Mucosa of descending colon (tissue), 3 donors: ENCODE measurements at regions of chr17 and their contacts with region 1.

Region 1: DNA sequence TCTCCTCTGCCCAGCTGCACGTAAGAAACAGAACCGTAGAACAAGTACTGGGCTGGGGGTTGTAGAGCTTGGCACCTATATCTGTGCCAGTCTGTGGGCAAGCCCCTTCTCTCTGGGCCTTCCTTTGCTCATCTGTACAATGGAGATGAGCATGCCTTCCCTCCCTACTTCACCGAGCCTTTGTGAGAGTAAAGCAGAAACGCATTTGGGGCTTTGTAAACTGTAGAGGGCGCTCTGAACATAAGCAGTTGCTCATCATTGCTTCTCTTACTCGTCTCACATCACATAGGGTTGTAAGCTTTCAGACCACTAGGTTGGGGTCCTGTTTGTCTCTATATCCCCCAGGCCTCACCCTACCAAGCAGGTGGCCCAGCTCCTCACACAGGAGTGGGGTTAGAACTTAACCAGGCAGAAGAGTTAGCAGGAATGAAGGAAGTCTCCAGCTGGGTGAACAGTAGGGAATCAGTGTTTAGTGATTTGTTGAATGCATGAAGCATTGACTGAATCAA is 15.1 kb downstream of the SAMD14 start:
- DNase-seq: peak in 1 of 3 donors; percentile 80
- ATAC-seq: peak; percentile 42
- H3K4me3 ChIP-seq: no peak overlapping the region
- H3K4me1 ChIP-seq: peaks cover 11% of the 10 kb centered on the region
- CTCF ChIP-seq: peak; percentile 44

Region 2: DNA sequence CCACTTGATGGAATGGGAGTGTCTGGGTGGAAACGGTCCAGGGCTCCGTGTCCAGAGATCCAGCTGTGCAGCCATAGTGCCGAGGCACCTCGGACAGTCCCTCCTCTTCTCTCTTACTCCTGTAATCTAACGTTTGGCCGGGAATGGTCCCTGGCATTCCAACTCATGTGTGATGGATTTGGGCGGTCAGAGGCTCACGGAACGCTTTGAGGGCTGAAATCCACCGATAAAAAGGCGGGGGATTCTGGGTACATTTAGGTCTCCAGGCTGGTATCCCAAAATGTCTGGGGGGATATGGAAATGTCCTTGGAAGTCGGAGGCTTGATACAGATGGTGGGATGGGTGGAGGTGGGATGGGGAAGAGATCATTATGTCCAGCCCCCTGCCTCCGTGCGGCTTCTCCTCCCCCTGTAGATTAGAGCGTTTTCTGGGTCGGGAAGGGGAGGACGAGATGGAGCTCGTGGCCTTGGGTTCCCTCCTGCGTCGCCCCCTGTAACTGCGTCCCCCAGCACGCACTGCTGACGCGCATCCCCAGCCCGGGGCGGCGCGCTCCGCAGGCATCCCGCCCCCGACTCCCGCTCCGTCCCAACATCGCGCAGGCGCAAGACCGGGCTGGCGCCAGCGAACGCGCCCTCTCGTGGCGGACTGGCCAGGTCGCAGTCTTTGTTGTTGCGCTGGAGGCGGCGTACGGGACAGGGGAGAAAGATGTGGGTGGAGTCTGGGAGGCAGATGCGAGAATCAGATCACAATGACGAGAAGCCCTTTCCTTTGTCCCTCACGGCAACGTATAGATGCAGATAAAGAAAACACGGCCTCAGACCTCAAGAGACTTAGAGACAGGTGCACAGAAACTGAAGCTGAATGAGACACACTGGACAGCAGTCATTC is 46.4 kb after region 1 on chr17:
- intact Hi-C with region 1: loop called in 1 of 2 experiments (anchors 10 kb)
- DNase-seq: peak; percentile 90 to 96 (median 93)
- ATAC-seq: peak; percentile 99
- H3K4me3 ChIP-seq: no peak overlapping the region
- H3K4me1 ChIP-seq: peaks cover 4% of the 10 kb centered on the region
- CTCF ChIP-seq: peak; percentile 95